ENCODE measurements at regions of chr10 and their contacts with region 1.

Region 1: GRCh38 chr10:5629303-5630111 is 36.9 kb downstream of the ASB13 start:
- DNase-seq: peak; percentile 76
- H3K4me3 Mint-ChIP-seq: peak overlapping the region; percentile 29
- H3K27ac Mint-ChIP-seq: peak overlapping the region; percentile 85
- H3K4me1 Mint-ChIP-seq: peaks cover 19% of the 10 kb centered on the region
- H3K27me3 Mint-ChIP-seq: peaks cover 3% of the 10 kb centered on the region

Region 2: DNA sequence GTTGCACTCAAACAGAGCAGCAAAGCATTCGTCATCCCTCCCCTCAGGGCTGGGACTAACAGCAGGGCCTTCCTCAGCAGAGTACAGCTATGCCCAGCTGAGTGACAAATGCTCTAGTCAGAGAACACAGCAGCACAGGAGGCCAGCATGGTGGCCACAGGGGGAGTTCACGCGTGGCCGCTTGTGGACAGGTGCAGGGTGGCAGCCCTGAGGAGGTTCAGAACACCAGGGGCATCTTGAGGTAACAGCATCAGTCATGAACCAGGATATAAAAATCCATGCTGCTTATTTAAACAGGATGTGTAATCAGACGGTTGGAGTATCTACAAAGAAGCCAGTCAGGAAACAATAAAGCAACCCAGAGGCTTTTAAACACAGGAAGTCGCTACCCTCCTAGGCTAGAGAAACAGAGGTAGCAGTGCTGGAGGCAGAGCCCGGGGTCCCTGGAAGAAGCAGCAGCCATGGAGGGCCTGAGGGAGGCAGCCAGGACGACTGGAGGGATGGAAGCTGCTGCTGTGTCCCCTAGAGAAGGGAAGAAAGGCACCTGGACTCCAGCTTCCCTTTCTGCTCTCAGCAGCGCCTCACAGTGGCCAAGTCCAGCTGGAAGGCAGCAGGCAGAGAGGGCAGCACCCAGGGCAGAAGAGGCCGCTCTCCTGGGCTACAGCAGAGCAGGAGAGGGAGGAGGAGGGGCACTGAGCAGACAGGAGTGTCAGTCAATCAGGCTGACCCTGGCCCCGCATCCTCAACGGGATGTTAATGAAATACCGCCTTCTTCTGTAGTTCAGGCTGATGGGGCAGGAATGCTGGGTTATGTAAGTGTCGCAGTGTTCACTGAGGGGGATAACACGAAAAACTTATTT is 335.6 kb before region 1 on chr10:
- intact Hi-C with region 1: loop called (anchors 2 kb)
- DNase-seq: peak; percentile 73
- H3K4me3 Mint-ChIP-seq: peak overlapping the region; percentile 93
- H3K27ac Mint-ChIP-seq: peak overlapping the region; percentile 100
- H3K4me1 Mint-ChIP-seq: peaks cover 82% of the 10 kb centered on the region
- H3K27me3 Mint-ChIP-seq: no peaks in the 10 kb centered on the region

Region 3: GRCh38 chr10:5548527-5549223 is 80.8 kb before region 1 on chr10:
- intact Hi-C with region 1: loop called (anchors 5 kb)
- DNase-seq: peak; percentile 51
- H3K4me3 Mint-ChIP-seq: no peak overlapping the region
- H3K27ac Mint-ChIP-seq: no peak overlapping the region
- H3K4me1 Mint-ChIP-seq: peaks cover 28% of the 10 kb centered on the region
- H3K27me3 Mint-ChIP-seq: peaks cover 4% of the 10 kb centered on the region

Region 4: GRCh38 chr10:5645375-5645774 is 15.9 kb after region 1 on chr10:
- intact Hi-C with region 1: no loop called
- DNase-seq: no peak
- H3K4me3 Mint-ChIP-seq: no peak overlapping the region
- H3K27ac Mint-ChIP-seq: no peak overlapping the region
- H3K4me1 Mint-ChIP-seq: peaks cover 24% of the 10 kb centered on the region
- H3K27me3 Mint-ChIP-seq: peaks cover 7% of the 10 kb centered on the region

Region 5: GRCh38 chr10:5666008-5666829 is 36.7 kb after region 1 on chr10 and contains the start of gene ASB13:
- intact Hi-C with region 1: loop called (anchors 1 kb)
- DNase-seq: peak; percentile 27
- H3K4me3 Mint-ChIP-seq: peak within 1 kb of the TSS; percentile 88
- H3K27ac Mint-ChIP-seq: peak within 1 kb of the TSS; percentile 86
- H3K4me1 Mint-ChIP-seq: peaks cover 12% of the 10 kb centered on the region
- H3K27me3 Mint-ChIP-seq: peaks cover 16% of the 10 kb centered on the region
- total RNA-seq, gene ASB13: 12.7 and 14.6 TPM in 2 replicates

Region 6: DNA sequence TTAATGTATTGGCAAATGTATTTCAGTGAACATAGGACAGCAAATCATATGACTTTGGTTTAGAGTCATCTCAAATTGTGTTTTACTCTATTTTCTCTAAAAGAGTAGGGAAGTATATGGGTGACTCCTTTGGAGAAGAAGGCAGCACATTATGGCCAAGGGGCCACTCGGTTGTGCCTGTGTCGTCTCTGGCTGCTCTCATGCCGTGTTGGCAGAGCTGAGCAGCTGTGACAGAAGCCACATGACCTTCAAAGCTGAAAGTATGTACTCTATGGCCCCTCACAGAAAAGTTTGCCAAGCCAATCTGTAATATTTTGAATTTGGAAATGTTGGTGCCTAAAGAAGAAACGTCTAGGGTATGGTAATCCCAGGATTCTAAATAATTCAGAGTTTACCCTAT is 102.6 kb after region 1 on chr10:
- intact Hi-C with region 1: loop called (anchors 2 kb)
- DNase-seq: no peak
- H3K4me3 Mint-ChIP-seq: no peak overlapping the region
- H3K27ac Mint-ChIP-seq: peak overlapping the region; percentile 46
- H3K4me1 Mint-ChIP-seq: peaks cover 43% of the 10 kb centered on the region
- H3K27me3 Mint-ChIP-seq: no peaks in the 10 kb centered on the region

Region 7: DNA sequence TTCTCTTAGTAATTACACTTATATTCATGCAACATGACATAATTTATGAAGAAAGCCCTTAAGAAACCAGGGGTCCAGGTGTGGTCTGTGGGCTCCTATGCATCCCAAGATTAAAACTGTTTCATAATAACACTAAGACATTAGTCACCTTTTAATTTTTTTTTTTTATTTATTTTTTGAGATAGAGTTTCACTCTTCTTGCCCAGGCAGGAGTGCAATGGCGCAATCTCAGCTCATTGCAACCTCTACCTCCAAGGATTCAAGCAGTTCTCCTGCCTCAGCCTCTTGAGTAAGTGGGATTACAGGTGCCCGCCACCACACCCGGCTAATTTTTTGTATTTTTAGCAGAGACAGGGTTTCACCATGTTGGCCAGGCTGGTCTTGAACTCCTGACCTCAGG is 171.3 kb after region 1 on chr10:
- intact Hi-C with region 1: no loop called
- DNase-seq: no peak
- H3K4me3 Mint-ChIP-seq: no peak overlapping the region
- H3K27ac Mint-ChIP-seq: no peak overlapping the region
- H3K4me1 Mint-ChIP-seq: peaks cover 25% of the 10 kb centered on the region
- H3K27me3 Mint-ChIP-seq: no peaks in the 10 kb centered on the region

Region 8: DNA sequence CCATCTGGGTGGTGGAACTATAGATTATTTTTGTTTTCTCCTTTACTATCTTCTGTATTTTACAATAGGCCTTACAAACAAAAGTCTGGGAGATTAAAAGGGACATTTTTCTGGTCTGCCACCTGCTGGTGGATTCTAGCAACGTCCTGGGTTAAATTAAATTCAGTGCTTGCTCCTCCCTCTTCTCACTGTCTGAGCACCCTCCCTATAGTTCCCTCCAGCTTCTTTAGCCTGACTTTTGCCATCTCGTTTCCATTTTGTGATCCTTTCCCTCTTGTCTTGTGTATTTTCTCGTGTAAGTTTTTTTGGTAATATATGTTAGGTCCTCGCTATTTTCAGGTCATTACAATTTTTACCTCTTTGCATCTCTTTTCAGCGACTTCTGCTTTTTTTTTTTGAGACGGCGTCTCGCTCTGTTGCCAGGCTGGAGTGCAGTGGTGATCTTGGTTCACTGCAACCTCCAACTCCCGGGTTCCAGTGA is 244.0 kb after region 1 on chr10:
- intact Hi-C with region 1: loop called (anchors 1 kb)
- DNase-seq: peak; percentile 59
- H3K4me3 Mint-ChIP-seq: peak overlapping the region; percentile 43
- H3K27ac Mint-ChIP-seq: no peak overlapping the region
- H3K4me1 Mint-ChIP-seq: peaks cover 6% of the 10 kb centered on the region
- H3K27me3 Mint-ChIP-seq: no peaks in the 10 kb centered on the region

Region 9: GRCh38 chr10:6088721-6089390 is 459.3 kb after region 1 on chr10 and contains the start of gene RBM17:
- intact Hi-C with region 1: loop called (anchors 5 kb)
- DNase-seq: peak; percentile 98
- H3K4me3 Mint-ChIP-seq: peak within 1 kb of the TSS; percentile 95
- H3K27ac Mint-ChIP-seq: peak within 1 kb of the TSS; percentile 88
- H3K4me1 Mint-ChIP-seq: peaks cover 63% of the 10 kb centered on the region
- H3K27me3 Mint-ChIP-seq: no peaks in the 10 kb centered on the region
- total RNA-seq, gene RBM17: 265 and 283 TPM in 2 replicates

Measured in activated T-helper 1 cell treated with anti-CD3 and anti-CD28 coated beads, Interleukin-12 subunit alpha, Interleukin-12 subunit beta, Interleukin-2, Interleukin-4 antibody, amounts not matched to agents 30 ng/mL and 10 ng/mL and 1 ng/mL, durations not matched to agents 14 hours and 24 hours and 36 hours (primary cell).